ENCODE measurements at regions of chr7 and their contacts with region 1.

Region 1: DNA sequence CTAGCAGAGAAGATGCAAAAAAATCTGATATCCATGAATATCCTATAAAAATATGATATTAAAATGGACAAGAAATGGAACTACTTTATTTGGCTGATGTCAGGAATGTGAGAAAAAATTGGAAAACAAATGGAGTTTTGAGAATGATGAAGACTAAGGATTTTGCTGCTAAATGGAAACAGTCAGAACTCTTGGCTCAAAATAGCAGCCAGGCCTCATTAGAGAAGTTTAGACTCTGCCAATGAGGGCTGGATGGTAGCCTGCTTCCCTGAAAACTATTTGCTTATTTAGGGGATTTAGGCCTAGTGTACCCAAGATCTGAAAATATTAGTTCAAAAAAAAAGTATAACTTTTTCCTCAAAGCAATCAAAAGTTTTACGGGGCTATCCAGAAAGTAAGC is 458.5 kb downstream of the TFEC start:
- DNase-seq: no peak
- ATAC-seq: no peak
- H3K4me3 ChIP-seq: no peak overlapping the region
- H3K27ac ChIP-seq: no peak overlapping the region
- H3K4me1 ChIP-seq: no peaks in the 10 kb centered on the region
- H3K27me3 ChIP-seq: no peaks in the 10 kb centered on the region
- CTCF ChIP-seq: no peak
- POLR2A ChIP-seq: no peak
- RAD21 ChIP-seq: no peak

Region 2: GRCh38 chr7:115198143-115198542 is 374.0 kb before region 1 on chr7:
- CTCF ChIA-PET with region 1: no interaction called
- POLR2A ChIA-PET with region 1: no interaction called
- dilution Hi-C with region 1: no loop called
- in situ Hi-C with region 1: no loop called
- intact Hi-C with region 1: no loop called
- DNase-seq: peak; percentile 74
- ATAC-seq: peak; percentile 77
- H3K4me3 ChIP-seq: no peak overlapping the region
- H3K27ac ChIP-seq: no peak overlapping the region
- H3K4me1 ChIP-seq: 0 out of 2 replicates have a peak, but pooled peaks cover 2% of the 10 kb centered on the region
- H3K27me3 ChIP-seq: no peaks in the 10 kb centered on the region
- CTCF ChIP-seq: no peak
- POLR2A ChIP-seq: no peak
- RAD21 ChIP-seq: no peak

Region 3: GRCh38 chr7:115561335-115562110 is 10.6 kb before region 1 on chr7:
- CTCF ChIA-PET with region 1: interaction called, 4 read pairs
- POLR2A ChIA-PET with region 1: no interaction called
- dilution Hi-C with region 1: no loop called
- in situ Hi-C with region 1: no loop called
- intact Hi-C with region 1: loop called (anchors 1 kb)
- DNase-seq: peak; percentile 79
- ATAC-seq: peak; percentile 59
- H3K4me3 ChIP-seq: no peak overlapping the region
- H3K27ac ChIP-seq: no peak overlapping the region
- H3K4me1 ChIP-seq: peaks cover 3% of the 10 kb centered on the region; the same call in 1 of the 2 replicates
- H3K27me3 ChIP-seq: no peaks in the 10 kb centered on the region
- CTCF ChIP-seq: peak; percentile 23; the same call in 1 of the 2 replicates
- POLR2A ChIP-seq: no peak
- RAD21 ChIP-seq: no peak

Measured in IMR-90 (cell line).